ENCODE measurements at regions of chr20 and their contacts with region 1.

Region 1: GRCh38 chr20:56422076-56422823 is 10.2 kb downstream of the CASS4 start:
- DNase-seq: peak in 3 of 4 experiments; percentile 41 to 82 (median 60)
- ATAC-seq: peak; percentile 40
- H3K4me3 ChIP-seq: 0 out of 2 replicates have a peak overlapping the region, but pooled peaks have one; percentile 6
- H3K27ac ChIP-seq: peak overlapping the region; percentile 85
- H3K4me1 ChIP-seq: peaks cover 34 to 78% of the 10 kb centered on the region in 2 experiments
- H3K27me3 ChIP-seq: no peaks in the 10 kb centered on the region
- CTCF ChIP-seq: peak in 2 of 3 experiments; percentile 52 to 56; a peak in 4 of 6 replicates
- EP300 ChIP-seq: peak; percentile 67; the same call in 1 of the 2 replicates
- POLR2A ChIP-seq: no peak
- RAD21 ChIP-seq: peak in 1 of 2 experiments; percentile 53; a peak in 3 of 4 replicates

Region 2: GRCh38 chr20:56143759-56144158 is 278.5 kb before region 1 on chr20:
- CTCF ChIA-PET with region 1: no interaction called
- POLR2A ChIA-PET with region 1: no interaction called
- in situ Hi-C with region 1: no loop called
- intact Hi-C with region 1: no loop called
- DNase-seq: no peak
- ATAC-seq: no peak
- H3K4me3 ChIP-seq: no peak overlapping the region
- H3K27ac ChIP-seq: no peak overlapping the region
- H3K4me1 ChIP-seq: no peaks in the 10 kb centered on the region
- H3K27me3 ChIP-seq: no peaks in the 10 kb centered on the region
- CTCF ChIP-seq: no peak
- EP300 ChIP-seq: no peak
- POLR2A ChIP-seq: no peak
- RAD21 ChIP-seq: no peak

Region 3: DNA sequence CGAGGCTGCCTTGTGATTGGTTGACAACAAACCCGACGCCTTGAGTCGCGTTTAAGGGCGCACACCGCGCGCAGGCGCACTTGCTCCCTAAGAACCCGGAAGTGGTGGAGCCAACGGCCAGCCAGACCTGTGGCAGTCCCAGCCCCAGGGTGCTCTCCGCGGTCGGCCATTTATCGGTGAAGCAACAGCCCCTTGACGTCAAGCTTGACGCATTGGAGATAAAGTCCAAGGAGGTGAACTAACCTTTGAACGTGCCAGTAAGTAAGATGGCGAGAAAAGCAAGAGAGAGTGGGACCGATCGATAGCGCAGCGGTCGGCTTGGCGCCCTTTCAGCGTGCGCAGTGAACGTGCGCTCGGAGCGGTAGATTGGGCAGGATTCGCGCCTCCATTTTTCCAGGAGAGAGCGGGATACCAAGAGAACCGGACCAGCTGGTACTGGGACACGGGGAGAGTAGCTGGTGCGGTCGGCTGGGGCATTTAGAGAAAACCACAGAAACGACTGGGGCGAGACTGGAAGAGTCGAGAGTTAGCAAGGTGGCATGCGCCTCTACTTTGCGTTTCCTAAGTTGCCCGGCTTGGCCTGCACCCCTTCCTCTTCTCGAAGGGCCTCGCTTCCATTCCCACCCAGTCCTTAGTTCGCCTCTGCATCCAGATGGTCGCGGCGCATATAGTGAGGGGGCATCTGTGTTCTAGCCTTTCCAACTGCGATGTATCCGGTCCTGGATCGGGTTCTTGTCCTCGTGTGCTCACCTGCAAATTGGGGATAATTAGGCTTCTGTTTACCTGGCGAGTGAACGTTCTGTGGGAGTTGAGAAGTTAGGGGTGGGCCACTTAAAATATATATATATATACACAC is 29.7 kb before region 1 on chr20 and contains the start of gene CSTF1:
- CTCF ChIA-PET with region 1: no interaction called
- POLR2A ChIA-PET with region 1: interaction called, 10 read pairs
- in situ Hi-C with region 1: no loop called
- intact Hi-C with region 1: no loop called
- DNase-seq: peak; percentile 99 to 100 (median 100)
- ATAC-seq: peak; percentile 95
- H3K4me3 ChIP-seq: peak within 1 kb of the TSS; percentile 92
- H3K27ac ChIP-seq: peak within 1 kb of the TSS; percentile 99
- H3K4me1 ChIP-seq: peaks cover 4 to 12% of the 10 kb centered on the region in 2 experiments; a peak in 3 of 5 replicates
- H3K27me3 ChIP-seq: no peaks in the 10 kb centered on the region
- CTCF ChIP-seq: no peak
- EP300 ChIP-seq: peak; percentile 70
- POLR2A ChIP-seq: peak; percentile 77; the same call in 1 of the 2 replicates
- RAD21 ChIP-seq: no peak
- polyA plus RNA-seq, gene CSTF1: 74.1 to 110 TPM

Region 4: DNA sequence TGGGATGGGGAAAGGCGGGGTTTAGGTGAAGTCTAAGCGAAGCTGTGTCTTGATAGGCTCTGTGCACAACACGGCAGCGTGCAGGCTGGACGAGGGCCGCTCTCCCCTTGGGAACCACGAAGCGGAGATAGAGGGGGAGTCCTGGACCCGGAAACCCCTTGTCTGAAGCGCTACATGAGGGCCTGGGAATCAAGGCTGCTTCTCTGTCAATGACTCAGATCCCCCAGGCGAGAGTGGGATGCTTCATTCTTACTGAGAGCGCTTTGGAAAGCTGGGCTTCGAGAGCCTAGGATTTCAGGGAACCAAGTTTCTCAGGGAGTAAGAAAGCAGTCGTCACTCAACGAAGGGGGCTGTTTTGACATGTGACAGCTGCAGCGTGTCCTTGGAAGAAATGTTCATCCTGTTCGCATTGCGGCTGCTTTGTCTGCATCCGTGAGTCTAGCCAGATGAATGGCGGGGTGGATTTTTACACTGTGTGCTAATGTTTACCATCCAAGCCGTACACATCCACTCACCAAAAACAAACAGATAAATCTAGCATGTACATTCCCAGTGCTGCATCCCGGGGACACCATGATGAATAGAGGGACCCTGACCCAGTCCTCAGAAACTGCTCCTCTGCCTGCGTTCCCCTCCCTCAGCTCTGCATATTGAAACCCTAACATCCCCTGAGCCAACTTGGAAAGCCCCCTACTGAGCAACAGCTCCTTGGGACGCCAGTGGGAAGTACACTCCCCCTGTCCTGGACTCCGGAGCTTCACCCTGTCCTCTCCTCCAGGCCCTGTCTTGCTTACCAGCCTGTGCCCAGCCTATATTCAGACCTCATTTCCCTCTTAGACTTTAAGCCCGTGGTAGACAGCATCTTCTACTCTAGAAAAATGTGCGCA is 21.6 kb after region 1 on chr20:
- CTCF ChIA-PET with region 1: no interaction called
- POLR2A ChIA-PET with region 1: interaction called, 15 read pairs
- in situ Hi-C with region 1: no loop called
- intact Hi-C with region 1: no loop called
- DNase-seq: no peak
- ATAC-seq: no peak
- H3K4me3 ChIP-seq: no peak overlapping the region
- H3K27ac ChIP-seq: no peak overlapping the region
- H3K4me1 ChIP-seq: peaks cover 9 to 19% of the 10 kb centered on the region in 2 experiments; a peak in 4 of 5 replicates
- H3K27me3 ChIP-seq: no peaks in the 10 kb centered on the region
- CTCF ChIP-seq: no peak
- EP300 ChIP-seq: no peak
- POLR2A ChIP-seq: no peak
- RAD21 ChIP-seq: no peak

Measured in K562 (cell line).